CD4-positive, alpha-beta memory T cell (primary cell): ENCODE measurements at regions of chr1 and their contacts with region 1.

Region 1: DNA sequence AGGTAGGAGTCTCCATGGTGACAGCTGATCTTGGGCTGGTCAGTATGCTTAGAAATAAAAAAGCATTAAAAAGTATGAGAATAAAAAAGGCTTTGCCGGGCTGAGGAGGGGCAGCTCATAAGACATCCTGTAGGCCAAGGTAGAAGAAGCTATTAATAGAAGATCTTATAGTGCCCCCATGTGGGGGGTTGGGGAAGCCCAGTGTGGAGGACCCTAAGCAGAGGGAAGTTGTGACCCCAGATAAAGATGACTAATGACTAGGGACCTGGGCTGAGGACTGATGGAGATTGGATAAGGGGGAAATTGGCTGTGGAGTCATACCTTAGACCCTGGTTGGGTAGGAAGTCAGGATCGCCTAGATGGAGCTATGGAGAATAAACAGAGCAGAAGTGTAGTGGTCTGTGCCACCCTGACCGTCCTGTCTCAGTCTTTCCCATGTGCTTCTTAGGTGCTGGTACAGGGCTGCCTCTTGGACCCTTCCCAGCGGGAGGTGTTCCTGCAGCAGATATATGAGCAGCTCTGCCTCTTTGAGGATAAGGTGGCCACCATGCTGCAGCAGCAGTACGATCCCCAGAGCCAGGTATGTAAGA is 25.0 kb downstream of the SZT2 start:
- DNase-seq: peak; percentile 58 to 68 (median 67)
- H3K4me3 ChIP-seq: no peak overlapping the region
- H3K4me3 Mint-ChIP-seq: no peak overlapping the region
- H3K27ac ChIP-seq: no peak overlapping the region
- H3K27ac Mint-ChIP-seq: peak overlapping the region in 4 of 7 donors; percentile 4 to 87 (median 68)
- H3K4me1 ChIP-seq: no peaks in the 10 kb centered on the region
- H3K4me1 Mint-ChIP-seq: peaks cover 0 to 6% (median 5%) of the 10 kb centered on the region in 4 donors
- H3K27me3 ChIP-seq: no peaks in the 10 kb centered on the region
- H3K27me3 Mint-ChIP-seq: no peaks in the 10 kb centered on the region

Region 2: DNA sequence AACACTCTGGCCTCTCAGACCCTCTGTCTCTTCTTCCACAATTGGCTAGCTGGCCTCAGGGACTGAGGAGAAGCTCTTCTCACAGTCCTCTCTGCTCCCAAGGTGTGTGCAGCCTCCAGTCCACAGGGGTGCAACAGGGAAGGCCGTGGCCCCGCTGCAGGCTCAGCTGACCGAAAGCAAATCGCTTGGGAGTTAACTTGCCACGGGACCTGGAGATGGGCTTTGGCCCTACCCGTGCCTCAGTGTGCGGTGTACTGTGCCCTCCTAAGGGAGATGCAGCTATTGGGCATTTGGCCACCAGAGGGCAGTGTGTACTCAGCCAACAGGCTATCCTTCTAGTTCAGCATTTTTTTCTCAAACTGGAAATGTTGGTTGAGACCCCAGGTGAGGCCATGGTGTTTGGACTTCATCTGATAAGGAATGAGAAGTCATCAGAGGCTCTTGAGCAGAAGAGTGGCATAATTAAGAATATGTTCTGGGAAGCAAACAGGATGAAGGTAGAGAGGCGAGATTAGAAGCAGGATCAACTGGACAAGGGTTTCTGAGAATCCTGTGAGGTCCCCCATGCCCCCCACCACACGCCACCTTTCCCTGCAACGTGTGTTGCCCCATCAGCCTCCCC is 187.5 kb before region 1 on chr1:
- CTCF ChIA-PET with region 1: interaction called, 218 read pairs
- POLR2A ChIA-PET with region 1: interaction called, 10 read pairs
- intact Hi-C with region 1: no loop called
- DNase-seq: peak; percentile 68 to 75 (median 72)
- H3K4me3 ChIP-seq: no peak overlapping the region
- H3K4me3 Mint-ChIP-seq: no peak overlapping the region
- H3K27ac ChIP-seq: no peak overlapping the region
- H3K27ac Mint-ChIP-seq: peak overlapping the region in 2 of 7 donors; percentile 18 to 53
- H3K4me1 ChIP-seq: no peaks in the 10 kb centered on the region
- H3K4me1 Mint-ChIP-seq: no peaks in the 10 kb centered on the region
- H3K27me3 ChIP-seq: no peaks in the 10 kb centered on the region
- H3K27me3 Mint-ChIP-seq: peaks cover 0 to 9% of the 10 kb centered on the region in 2 donors

Region 3: DNA sequence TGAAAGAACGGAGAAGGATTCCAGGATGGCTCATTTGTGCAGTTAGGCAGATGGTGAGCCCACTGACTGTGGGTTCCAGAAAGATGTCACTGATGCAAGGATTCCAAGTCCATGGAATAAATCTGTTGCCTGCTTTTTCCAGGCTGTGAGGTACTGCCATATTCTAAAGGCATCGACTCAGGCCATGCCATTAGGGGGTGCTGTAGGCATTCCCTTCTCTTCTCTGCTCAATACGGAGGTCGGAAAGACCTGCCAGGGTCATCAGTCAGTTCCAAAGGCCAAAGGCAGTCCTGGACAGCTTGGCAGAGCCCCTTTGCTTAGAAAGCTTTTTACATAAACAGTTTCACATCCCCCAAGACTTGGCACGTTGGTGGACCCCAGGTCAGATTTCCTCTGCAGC is 176.6 kb before region 1 on chr1:
- CTCF ChIA-PET with region 1: interaction called, 218 read pairs
- POLR2A ChIA-PET with region 1: no interaction called
- intact Hi-C with region 1: no loop called
- DNase-seq: peak in 2 of 5 donors; percentile 3 to 11
- H3K4me3 ChIP-seq: no peak overlapping the region
- H3K4me3 Mint-ChIP-seq: no peak overlapping the region
- H3K27ac ChIP-seq: no peak overlapping the region
- H3K27ac Mint-ChIP-seq: peak overlapping the region in 1 of 7 donors; percentile 37
- H3K4me1 ChIP-seq: no peaks in the 10 kb centered on the region
- H3K4me1 Mint-ChIP-seq: no peaks in the 10 kb centered on the region
- H3K27me3 ChIP-seq: no peaks in the 10 kb centered on the region
- H3K27me3 Mint-ChIP-seq: peaks cover 5 to 15% of the 10 kb centered on the region in 2 donors

Region 4: DNA sequence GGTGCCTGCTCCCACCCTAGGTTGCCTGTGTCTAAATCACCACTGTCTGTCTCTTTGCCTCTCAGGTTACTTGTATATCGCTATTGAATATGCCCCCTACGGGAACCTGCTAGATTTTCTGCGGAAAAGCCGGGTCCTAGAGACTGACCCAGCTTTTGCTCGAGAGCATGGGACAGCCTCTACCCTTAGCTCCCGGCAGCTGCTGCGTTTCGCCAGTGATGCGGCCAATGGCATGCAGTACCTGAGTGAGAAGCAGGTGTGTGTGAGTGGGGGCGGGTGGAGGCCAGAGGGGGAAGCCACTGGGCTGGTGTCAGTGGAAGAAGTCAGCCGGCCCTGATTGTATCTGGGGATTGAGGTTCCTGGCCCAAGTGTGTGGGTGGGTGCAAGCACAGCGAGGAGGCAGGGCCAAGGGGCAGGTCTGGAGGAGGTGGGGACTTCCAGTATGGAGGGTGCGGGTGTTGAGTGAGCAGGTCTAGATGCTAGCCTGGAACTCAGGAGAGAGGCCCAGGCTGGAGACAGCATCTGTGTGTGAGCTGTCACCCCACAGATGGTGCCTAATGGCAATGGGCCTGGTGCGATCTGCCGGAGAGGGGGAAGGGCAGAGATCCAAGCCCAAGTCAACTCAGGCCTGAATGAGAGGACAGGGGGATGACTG is 96.8 kb before region 1 on chr1:
- CTCF ChIA-PET with region 1: no interaction called
- POLR2A ChIA-PET with region 1: no interaction called
- intact Hi-C with region 1: no loop called
- DNase-seq: no peak
- H3K4me3 ChIP-seq: no peak overlapping the region
- H3K4me3 Mint-ChIP-seq: peak overlapping the region in 1 of 8 donors; percentile 46
- H3K27ac ChIP-seq: no peak overlapping the region
- H3K27ac Mint-ChIP-seq: no peak overlapping the region
- H3K4me1 ChIP-seq: no peaks in the 10 kb centered on the region
- H3K4me1 Mint-ChIP-seq: no peaks in the 10 kb centered on the region
- H3K27me3 ChIP-seq: no peaks in the 10 kb centered on the region
- H3K27me3 Mint-ChIP-seq: no peaks in the 10 kb centered on the region

Region 5: DNA sequence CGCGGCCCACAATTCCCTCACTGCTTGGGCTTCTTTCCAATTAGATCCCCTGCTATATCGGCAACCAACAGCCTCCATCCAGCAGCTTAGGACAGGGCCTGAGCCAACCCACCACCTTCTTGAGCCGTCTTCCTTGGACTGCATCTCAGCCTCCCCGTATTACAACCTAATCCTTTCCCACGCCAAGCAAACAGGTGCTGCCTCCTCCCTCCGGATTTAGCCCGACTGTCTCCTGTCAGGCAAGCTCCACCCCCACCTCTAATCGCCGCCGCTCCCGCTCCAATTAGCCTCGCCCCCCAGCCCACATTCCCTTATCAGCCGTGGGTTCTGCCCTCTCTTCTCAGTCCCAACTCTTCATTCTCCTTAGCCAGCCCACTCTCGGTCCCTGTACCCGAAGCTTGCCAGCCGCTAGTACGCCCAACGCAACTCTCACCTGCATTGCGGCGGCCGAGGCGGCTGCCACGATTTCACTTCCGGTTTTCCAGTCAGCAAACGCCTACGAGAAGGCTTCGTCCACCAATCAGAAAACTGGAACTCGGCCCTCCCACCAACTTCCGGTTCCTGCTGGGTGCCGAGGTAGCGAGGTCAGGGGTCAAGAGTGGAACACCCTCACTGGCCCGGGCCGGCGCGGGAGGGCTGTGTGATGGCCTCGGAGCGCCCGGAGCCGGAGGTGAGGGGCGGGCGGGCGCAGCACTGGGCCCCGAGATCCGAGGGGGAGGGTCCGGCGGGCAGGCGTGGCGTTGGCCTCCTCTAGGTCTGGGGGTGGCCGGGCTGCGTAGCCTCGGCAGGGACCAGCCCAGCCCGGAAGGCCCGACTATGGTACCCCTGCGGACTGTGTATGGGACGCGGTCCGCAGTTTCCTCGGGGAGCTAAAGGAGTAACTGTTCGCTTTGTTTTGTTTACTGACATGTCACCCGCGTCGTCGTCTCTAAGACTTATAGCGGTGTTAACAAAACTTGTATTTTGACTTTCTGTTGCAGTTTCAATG is 25.1 kb before region 1 on chr1 and contains the starts of genes MED8 and SZT2:
- CTCF ChIA-PET with region 1: interaction called, 10 read pairs
- POLR2A ChIA-PET with region 1: interaction called, 10 read pairs
- intact Hi-C with region 1: no loop called
- DNase-seq: peak; percentile 88 to 93 (median 91)
- H3K4me3 ChIP-seq: peak within 1 kb of the TSS; percentile 87 to 88
- H3K4me3 Mint-ChIP-seq: peak within 1 kb of the TSS; percentile 99 to 100 (median 100)
- H3K27ac ChIP-seq: peak within 1 kb of the TSS; percentile 82
- H3K27ac Mint-ChIP-seq: peak within 1 kb of the TSS; percentile 89 to 100 (median 99)
- H3K4me1 ChIP-seq: peaks cover 28% of the 10 kb centered on the region
- H3K4me1 Mint-ChIP-seq: peaks cover 32 to 60% (median 45%) of the 10 kb centered on the region in 4 donors
- H3K27me3 ChIP-seq: no peaks in the 10 kb centered on the region
- H3K27me3 Mint-ChIP-seq: no peaks in the 10 kb centered on the region
- total RNA-seq, gene MED8: 34.0 to 35.6 TPM
- total RNA-seq, gene SZT2: 135 to 153 TPM